GM10248 (cell line): ENCODE measurements at regions of chr10 and their contacts with region 1.

Region 1: DNA sequence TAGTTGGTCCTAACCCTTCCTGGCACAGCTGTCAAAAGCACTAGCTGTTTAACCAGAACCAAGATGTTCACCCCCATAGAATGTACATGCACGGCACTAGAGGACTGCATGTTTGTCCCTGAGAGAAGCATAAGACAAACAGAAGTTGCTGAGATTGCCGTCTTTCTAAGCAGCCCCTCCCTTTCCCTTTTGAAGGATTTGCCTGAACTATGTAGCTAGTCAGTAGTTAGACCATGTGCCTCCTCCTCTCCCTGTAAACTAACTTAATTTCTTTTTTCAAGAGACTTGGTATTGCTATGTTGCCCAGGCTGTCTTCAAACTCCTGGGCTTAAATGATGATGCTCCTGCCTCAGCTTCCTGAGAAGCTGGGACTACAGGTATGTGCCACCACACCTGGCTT is 40.7 kb downstream of the TBC1D12 start:
- DNase-seq: no peak
- CTCF ChIP-seq: no peak

Region 2: GRCh38 chr10:94279835-94280709 is 163.0 kb before region 1 on chr10:
- CTCF ChIA-PET with region 1: interaction called, 20 read pairs
- POLR2A ChIA-PET with region 1: no interaction called
- DNase-seq: peak; percentile 48
- CTCF ChIP-seq: peak; percentile 92

Region 3: DNA sequence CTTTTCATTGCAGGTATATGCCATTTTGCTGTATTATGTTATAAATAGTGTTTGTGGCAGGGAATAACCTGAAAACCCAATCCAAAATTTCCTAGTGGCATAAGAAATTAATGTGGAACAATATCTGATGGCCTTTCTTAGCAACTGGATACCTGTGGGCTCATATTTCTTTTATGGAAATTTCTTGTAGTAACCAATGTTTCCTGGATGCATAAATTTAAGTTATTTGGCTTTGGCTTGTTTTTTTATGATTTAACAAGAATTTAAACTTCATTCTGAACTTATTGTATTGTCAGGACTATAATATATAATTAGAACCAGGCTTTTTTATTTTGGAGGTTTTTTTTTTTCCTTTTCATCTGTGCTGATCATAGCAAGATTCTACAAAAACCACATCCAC is 10.6 kb before region 1 on chr10:
- CTCF ChIA-PET with region 1: interaction called, 41 read pairs
- POLR2A ChIA-PET with region 1: no interaction called
- DNase-seq: no peak
- CTCF ChIP-seq: no peak

Region 4: GRCh38 chr10:94459385-94459784 is 16.3 kb after region 1 on chr10:
- CTCF ChIA-PET with region 1: interaction called, 44 read pairs
- POLR2A ChIA-PET with region 1: no interaction called
- DNase-seq: no peak
- CTCF ChIP-seq: no peak